ENCODE measurements at regions of chr1 and their contacts with region 1.

Region 1: GRCh38 chr1:175035865-175036264 is 12.6 kb upstream of the MRPS14 start:
- DNase-seq: no peak
- H3K4me3 ChIP-seq: no peak overlapping the region
- H3K27ac ChIP-seq: no peak overlapping the region
- H3K4me1 ChIP-seq: no peaks in the 10 kb centered on the region
- H3K27me3 ChIP-seq: no peaks in the 10 kb centered on the region
- CTCF ChIP-seq: no peak
- EP300 ChIP-seq: no peak
- POLR2A ChIP-seq: no peak

Region 2: DNA sequence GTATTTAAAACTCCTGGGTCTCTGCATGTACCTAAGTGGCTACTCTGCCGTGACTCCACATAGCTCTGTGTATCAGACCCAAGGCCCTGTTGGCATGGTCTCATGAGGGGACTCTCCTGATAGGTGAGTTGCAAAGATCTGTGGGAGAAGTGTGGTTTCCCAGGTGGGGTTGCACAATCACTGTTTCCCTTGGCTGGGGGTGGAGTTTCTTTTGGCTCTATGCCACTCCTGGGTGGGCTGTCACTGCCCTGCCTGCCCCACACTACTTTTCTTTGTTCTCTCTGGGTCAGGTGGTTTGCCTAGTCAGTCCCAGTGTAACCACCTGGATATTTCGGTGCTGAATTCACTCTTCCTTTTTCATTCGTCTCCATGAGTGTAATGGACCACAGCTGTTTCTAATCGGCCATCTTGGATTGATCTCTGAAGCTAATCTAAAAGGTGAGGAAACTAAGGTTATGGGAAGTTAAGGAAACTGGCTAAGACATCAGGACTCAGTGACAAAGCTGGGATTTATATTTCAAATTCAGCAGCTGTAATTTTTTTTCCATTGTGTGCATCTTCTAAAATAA is 133.2 kb before region 1 on chr1:
- in situ Hi-C with region 1: no loop called
- intact Hi-C with region 1: no loop called
- DNase-seq: no peak
- H3K4me3 ChIP-seq: no peak overlapping the region
- H3K27ac ChIP-seq: no peak overlapping the region
- H3K4me1 ChIP-seq: peaks cover 0 to 9% (median 7%) of the 10 kb centered on the region in 4 donors
- H3K27me3 ChIP-seq: no peaks in the 10 kb centered on the region
- CTCF ChIP-seq: no peak
- EP300 ChIP-seq: no peak
- POLR2A ChIP-seq: no peak

Region 3: GRCh38 chr1:175129997-175130648 is 94.3 kb after region 1 on chr1:
- in situ Hi-C with region 1: loop called in 3 of 4 experiments (anchors 10 to 25 kb)
- intact Hi-C with region 1: loop called (anchors 10 kb)
- DNase-seq: no peak
- H3K4me3 ChIP-seq: no peak overlapping the region
- H3K27ac ChIP-seq: peak overlapping the region; percentile 40 to 71 (median 64)
- H3K4me1 ChIP-seq: peaks cover 7 to 49% (median 17%) of the 10 kb centered on the region in 4 donors
- H3K27me3 ChIP-seq: no peaks in the 10 kb centered on the region
- CTCF ChIP-seq: no peak
- EP300 ChIP-seq: no peak
- POLR2A ChIP-seq: no peak

Region 4: DNA sequence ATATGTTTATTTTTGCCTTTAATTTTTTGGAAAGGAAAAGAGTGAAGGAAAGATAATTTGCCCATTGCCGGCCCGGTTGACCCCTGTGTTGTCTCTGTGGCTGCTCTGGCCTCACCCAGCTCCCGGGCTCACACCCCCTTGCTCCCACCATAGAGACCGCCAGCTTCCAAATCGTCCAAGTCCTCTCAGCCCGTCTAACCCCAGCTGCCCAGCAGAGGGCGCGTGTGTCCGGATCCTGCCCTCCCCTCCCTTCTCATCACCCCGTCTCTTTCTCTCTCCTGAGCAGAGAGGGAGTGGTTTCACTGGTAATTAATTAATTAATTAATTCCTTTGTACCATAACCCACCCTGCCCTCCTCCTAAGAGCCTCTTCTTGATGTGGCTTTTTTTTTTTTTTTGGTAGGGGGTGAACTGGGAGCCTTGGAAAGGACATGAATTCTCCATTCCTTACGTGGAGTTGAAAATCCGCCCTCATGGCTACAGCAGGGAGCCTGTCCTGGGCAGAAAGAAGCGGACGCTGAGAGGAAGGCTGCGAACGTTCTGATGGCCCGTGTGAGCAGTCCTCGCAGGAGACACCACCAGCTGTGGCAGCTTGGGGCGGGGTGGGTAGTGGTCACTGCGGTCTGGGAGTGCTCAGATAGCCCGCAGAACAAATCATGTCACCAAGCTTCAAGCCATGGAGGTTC is 110.8 kb after region 1 on chr1:
- in situ Hi-C with region 1: loop called in 1 of 4 experiments (anchors 25 kb)
- intact Hi-C with region 1: loop called (anchors 5 kb)
- DNase-seq: peak; percentile 68
- H3K4me3 ChIP-seq: no peak overlapping the region
- H3K27ac ChIP-seq: no peak overlapping the region
- H3K4me1 ChIP-seq: peaks cover 0 to 7% (median 0%) of the 10 kb centered on the region in 4 donors
- H3K27me3 ChIP-seq: peaks cover 4% of the 10 kb centered on the region
- CTCF ChIP-seq: peak; percentile 64 to 85 (median 80)
- EP300 ChIP-seq: no peak
- POLR2A ChIP-seq: no peak

Region 5: DNA sequence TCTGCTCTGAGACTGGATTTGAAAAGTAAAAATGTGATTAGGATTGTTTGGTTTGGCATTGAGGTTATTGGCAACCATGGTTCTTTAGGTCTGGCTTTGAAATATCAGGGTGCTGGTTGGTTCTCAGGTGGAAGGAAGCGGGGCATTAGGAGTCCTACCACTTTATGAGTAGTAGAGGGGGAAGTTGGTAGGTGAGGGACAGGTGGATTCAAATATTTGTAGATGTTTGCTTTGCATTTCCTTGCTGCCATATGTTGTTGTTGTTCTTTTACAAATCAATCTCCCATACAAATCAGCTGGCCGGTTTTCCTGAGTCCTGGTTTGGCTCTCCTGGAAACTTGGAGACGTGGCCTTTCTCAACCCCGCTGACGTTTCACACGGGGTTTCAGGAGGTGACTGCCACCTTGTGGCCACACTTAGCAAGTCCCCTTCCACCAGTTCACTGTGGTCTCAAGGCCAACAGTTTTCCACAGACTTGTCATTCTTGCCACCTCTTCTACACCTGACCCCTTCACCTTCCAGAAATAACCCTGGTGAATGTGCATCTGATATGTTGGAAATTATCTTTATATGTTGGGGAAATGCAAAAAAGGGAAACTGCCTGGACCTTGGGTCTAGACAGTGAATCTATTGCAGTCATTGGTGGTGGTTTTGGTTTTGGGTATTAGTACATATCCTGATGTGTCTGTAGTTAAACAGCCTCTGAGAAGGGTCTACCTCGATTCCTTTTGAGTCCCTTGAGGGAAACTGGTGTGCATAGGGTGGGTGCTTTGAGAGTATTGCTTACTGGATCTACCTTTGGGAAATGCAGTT is 283.8 kb after region 1 on chr1:
- in situ Hi-C with region 1: loop called in 3 of 4 experiments (anchors 10 to 25 kb)
- intact Hi-C with region 1: loop called (anchors 10 kb)
- DNase-seq: peak; percentile 78
- H3K4me3 ChIP-seq: no peak overlapping the region
- H3K27ac ChIP-seq: peak overlapping the region in 1 of 4 donors; percentile 10
- H3K4me1 ChIP-seq: peaks cover 0 to 11% (median 2%) of the 10 kb centered on the region in 4 donors
- H3K27me3 ChIP-seq: no peaks in the 10 kb centered on the region
- CTCF ChIP-seq: peak; percentile 85 to 90 (median 86)
- EP300 ChIP-seq: no peak
- POLR2A ChIP-seq: no peak

Region 6: GRCh38 chr1:175580841-175581240 is 545.0 kb after region 1 on chr1:
- in situ Hi-C with region 1: no loop called
- intact Hi-C with region 1: no loop called
- DNase-seq: no peak
- H3K4me3 ChIP-seq: no peak overlapping the region
- H3K27ac ChIP-seq: no peak overlapping the region
- H3K4me1 ChIP-seq: no peaks in the 10 kb centered on the region
- H3K27me3 ChIP-seq: no peaks in the 10 kb centered on the region
- CTCF ChIP-seq: no peak
- EP300 ChIP-seq: no peak
- POLR2A ChIP-seq: no peak

Measured in transverse colon (tissue), 4 donors.